MCF 10A (cell line): ENCODE measurements at regions of chr13 and their contacts with region 1.

Region 1: DNA sequence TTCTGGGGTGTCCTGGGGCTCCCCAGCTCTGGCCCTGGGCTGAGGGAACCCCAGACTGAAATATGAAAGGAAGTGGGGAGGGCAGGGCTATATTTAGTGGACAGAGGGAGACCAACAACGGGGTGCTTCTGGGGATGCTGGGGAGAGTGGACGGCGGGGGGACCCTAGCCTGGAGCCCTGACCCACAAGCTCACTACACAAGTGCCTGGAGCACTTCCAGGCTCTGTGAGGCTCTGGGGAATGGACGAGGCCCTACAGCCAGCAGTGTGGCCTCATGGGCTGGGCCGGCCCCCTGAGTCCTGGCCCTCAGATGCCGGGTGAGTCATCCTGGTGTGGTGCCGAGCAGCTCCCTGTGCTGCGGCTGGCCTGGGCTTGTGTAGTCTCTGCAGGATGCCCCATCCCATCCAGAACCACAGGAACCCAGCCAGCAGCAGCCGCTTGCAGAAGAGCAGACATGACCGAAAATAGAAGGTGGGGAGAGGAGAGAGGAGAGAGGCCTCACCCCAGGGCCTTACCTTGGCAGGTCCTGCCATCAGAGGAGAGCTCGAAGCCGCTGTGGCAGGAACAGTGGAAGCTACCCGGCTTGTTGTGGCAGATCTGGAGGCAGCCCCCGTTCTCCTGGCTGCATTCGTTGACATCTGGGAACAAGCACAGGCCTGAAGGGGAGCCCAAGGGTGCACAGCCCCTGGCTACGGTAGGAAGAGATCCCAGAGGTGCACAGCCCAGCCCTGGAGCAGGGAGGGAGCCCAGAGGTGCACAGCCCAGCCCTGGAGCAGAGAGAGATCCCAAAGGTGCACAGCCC is 26.1 kb downstream of the GAS6 start:
- DNase-seq: peak; percentile 99
- H3K4me3 Mint-ChIP-seq: peak overlapping the region; percentile 75
- H3K27ac Mint-ChIP-seq: peak overlapping the region; percentile 100
- H3K4me1 Mint-ChIP-seq: peaks cover 21% of the 10 kb centered on the region
- H3K27me3 Mint-ChIP-seq: no peaks in the 10 kb centered on the region
- CTCF ChIP-seq: no peak

Region 2: DNA sequence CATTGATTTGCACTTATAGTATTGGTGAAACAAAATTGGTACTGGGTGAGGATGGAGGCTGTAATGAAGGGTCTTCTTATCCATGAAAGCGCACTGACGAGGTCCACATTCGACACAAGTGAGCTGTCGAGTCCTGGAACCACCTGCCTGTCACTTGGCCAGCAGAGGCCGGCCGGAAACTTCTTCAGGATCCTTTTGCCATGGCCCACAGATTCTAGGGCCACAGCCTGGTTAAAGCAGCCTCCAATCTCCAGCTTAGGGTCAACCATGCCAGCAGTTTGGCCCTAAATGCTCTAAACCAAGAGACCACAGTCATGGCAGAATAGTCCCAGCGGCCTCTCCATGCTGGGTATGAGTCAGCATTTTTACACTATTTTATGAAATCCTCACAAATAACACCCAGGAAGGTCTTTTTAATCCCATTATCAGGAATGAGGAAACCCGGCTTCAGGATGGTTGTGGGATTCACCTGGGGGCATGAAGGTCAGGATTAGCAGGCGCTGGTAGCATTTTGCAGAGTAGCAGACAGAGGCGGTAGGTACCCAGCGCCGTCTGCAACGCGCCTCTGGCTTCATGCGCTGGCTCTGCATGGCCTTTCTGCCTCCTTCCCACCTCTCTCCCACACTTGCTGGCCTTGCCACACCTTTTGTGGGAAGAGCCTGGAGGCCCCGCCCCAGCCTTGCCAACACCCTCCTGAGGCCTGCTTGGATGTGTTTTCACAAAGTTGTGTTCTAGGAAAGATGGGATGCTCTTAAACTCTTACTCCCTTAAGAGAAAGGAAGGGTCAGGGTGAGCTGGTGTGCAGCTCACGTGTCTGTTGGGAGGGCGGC is 10.9 kb after region 1 on chr13:
- CTCF ChIA-PET with region 1: interaction called, 3 read pairs
- POLR2A ChIA-PET with region 1: interaction called, 52 read pairs
- intact Hi-C with region 1: no loop called
- DNase-seq: peak; percentile 86
- H3K4me3 Mint-ChIP-seq: no peak overlapping the region
- H3K27ac Mint-ChIP-seq: no peak overlapping the region
- H3K4me1 Mint-ChIP-seq: peaks cover 20% of the 10 kb centered on the region
- H3K27me3 Mint-ChIP-seq: no peaks in the 10 kb centered on the region
- CTCF ChIP-seq: no peak